ENCODE measurements at regions of chr17 and their contacts with region 1.

Region 1: GRCh38 chr17:39621523-39622379 is 5.0 kb upstream of the PPP1R1B start:
- DNase-seq: peak; percentile 85 to 91
- H3K4me3 ChIP-seq: no peak overlapping the region
- H3K27ac ChIP-seq: no peak overlapping the region
- H3K4me1 ChIP-seq: peaks cover 0 to 45% (median 16%) of the 10 kb centered on the region in 4 donors
- H3K27me3 ChIP-seq: peaks cover 2 to 46% of the 10 kb centered on the region in 2 donors
- CTCF ChIP-seq: peak; percentile 99 to 100

Region 2: GRCh38 chr17:39730095-39730921 is 108.6 kb after region 1 on chr17 and contains the start of gene MIEN1:
- intact Hi-C with region 1: loop called (anchors 5 kb)
- DNase-seq: peak; percentile 85 to 94
- H3K4me3 ChIP-seq: peak within 1 kb of the TSS; percentile 73 to 82
- H3K27ac ChIP-seq: peak within 1 kb of the TSS; percentile 85 to 91
- H3K4me1 ChIP-seq: peaks cover 0 to 15% (median 10%) of the 10 kb centered on the region in 4 donors
- H3K27me3 ChIP-seq: no peaks in the 10 kb centered on the region
- CTCF ChIP-seq: peak; percentile 90 to 96